Left lung (tissue), 14 donors: ENCODE measurements at regions of chr3 and their contacts with region 1.

Region 1: GRCh38 chr3:124567179-124567578 is 163.1 kb upstream of the UMPS start:
- DNase-seq: no peak
- ATAC-seq: no peak
- H3K4me3 ChIP-seq: no peak overlapping the region
- H3K27ac ChIP-seq: no peak overlapping the region
- H3K4me1 ChIP-seq: no peaks in the 10 kb centered on the region
- H3K27me3 ChIP-seq: no peaks in the 10 kb centered on the region
- CTCF ChIP-seq: no peak

Region 2: GRCh38 chr3:124688581-124689454 is 121.6 kb after region 1 on chr3:
- intact Hi-C with region 1: loop called (anchors 2 to 5 kb)
- DNase-seq: peak in 3 of 4 donors; percentile 65 to 82 (median 68)
- ATAC-seq: peak; percentile 93
- H3K4me3 ChIP-seq: no peak overlapping the region
- H3K27ac ChIP-seq: no peak overlapping the region
- H3K4me1 ChIP-seq: peaks cover 0 to 8% of the 10 kb centered on the region in 2 donors
- H3K27me3 ChIP-seq: no peaks in the 10 kb centered on the region
- CTCF ChIP-seq: peak; percentile 74 to 89